ENCODE measurements at regions of chr19 and their contacts with region 1.

Region 1: DNA sequence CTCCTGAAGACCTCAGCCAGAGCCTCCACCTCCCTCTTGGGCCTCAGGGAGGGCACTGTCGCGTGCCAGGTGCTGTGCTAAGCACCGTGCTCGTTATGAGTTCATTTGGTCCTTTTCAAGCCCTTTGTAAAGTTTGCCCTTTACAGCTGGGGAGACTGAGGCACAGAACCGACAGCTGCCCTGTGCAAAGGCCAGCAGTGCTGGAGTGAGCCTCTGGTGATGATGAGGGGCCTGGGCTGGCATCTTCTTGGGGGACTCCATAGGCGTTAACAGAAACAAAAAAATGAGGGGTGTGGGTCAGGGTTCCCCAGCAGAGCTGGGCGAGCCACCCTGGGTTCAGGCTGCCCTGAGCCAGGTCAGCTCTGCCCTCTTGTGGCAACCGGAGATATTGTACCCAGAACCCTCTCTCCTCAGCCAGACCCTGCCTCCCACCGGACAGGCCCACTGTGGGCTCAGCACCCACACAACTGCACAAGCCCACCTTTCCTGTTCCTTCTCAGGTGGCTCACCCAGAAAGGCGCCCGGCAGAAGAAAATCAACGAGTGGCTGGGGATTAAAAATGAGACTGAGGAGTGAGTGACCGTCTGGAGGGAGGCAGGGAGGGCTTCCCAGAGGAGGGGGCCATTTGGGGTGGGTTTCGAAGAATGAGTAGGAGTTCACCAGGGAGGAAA is 5.5 kb upstream of the IFI30 start:
- DNase-seq: peak in 3 of 10 donors; percentile 34 to 64 (median 45)
- H3K4me3 ChIP-seq: no peak overlapping the region
- H3K27ac ChIP-seq: peak overlapping the region in 5 of 59 donors; percentile 5 to 35 (median 18)
- H3K27me3 ChIP-seq: no peaks in the 10 kb centered on the region
- CTCF ChIP-seq: peak; percentile 45 to 84 (median 73)

Region 2: GRCh38 chr19:18007044-18007916 is 160.8 kb before region 1 on chr19:
- intact Hi-C with region 1: loop called in 1 of 2 experiments (anchors 2 kb)
- DNase-seq: peak; percentile 75 to 93 (median 82)
- H3K4me3 ChIP-seq: peak overlapping the region; percentile 50 to 94 (median 73)
- H3K27ac ChIP-seq: peak overlapping the region; percentile 72 to 99 (median 93)
- H3K27me3 ChIP-seq: no peaks in the 10 kb centered on the region
- CTCF ChIP-seq: peak; percentile 90 to 100 (median 98)